Transverse colon (tissue), 4 donors: ENCODE measurements at regions of chr10 and their contacts with region 1.

Region 1: DNA sequence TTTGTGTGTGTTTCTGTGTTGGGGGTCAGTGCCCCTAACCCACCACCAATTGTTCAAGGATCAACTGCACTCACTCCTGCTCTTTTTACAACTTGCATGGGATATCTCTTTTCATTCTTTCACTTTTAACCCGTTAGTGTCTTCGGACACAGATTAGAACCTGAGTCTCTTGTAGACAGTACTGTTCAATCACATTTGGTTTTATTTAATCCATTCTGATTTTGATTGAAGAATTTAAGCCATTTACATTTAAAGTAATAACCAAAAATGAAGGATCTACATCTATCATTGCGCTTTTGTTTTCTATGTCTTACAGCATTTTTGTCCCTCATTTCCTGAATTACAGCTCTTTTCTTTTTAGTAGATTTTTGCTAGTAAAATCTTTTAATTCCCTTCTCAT is 43.6 kb downstream of the ZNF248 start:
- DNase-seq: no peak
- H3K4me3 ChIP-seq: no peak overlapping the region
- H3K27ac ChIP-seq: no peak overlapping the region
- H3K4me1 ChIP-seq: no peaks in the 10 kb centered on the region
- H3K27me3 ChIP-seq: no peaks in the 10 kb centered on the region
- CTCF ChIP-seq: no peak
- EP300 ChIP-seq: no peak
- POLR2A ChIP-seq: no peak

Region 2: GRCh38 chr10:37619336-37619735 is 194.4 kb before region 1 on chr10:
- in situ Hi-C with region 1: no loop called
- intact Hi-C with region 1: no loop called
- DNase-seq: no peak
- H3K4me3 ChIP-seq: no peak overlapping the region
- H3K27ac ChIP-seq: no peak overlapping the region
- H3K4me1 ChIP-seq: no peaks in the 10 kb centered on the region
- H3K27me3 ChIP-seq: no peaks in the 10 kb centered on the region
- CTCF ChIP-seq: no peak
- EP300 ChIP-seq: no peak
- POLR2A ChIP-seq: no peak

Region 3: GRCh38 chr10:37794305-37794976 is 19.3 kb before region 1 on chr10:
- in situ Hi-C with region 1: no loop called
- intact Hi-C with region 1: loop called (anchors 1 kb)
- DNase-seq: no peak
- H3K4me3 ChIP-seq: no peak overlapping the region
- H3K27ac ChIP-seq: no peak overlapping the region
- H3K4me1 ChIP-seq: no peaks in the 10 kb centered on the region
- H3K27me3 ChIP-seq: no peaks in the 10 kb centered on the region
- CTCF ChIP-seq: no peak
- EP300 ChIP-seq: no peak
- POLR2A ChIP-seq: no peak

Region 4: DNA sequence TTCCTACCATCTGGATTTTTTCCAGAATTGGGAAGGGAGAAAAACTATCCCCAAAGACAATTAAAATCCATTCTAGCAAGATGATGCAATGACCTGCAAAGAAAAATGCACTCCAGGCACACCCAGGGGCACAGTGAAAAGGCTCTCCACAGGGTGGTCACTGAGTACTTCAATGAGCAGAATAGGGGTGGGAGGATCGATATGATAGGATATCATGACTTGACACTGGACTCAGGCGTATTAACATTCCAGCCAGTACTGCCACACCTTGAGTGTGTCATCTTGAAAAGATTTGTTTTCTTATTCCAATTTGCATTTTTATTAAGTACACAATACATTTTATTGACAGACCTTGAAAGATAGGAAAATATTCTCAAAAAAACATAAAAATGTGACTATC is 412.6 kb after region 1 on chr10:
- in situ Hi-C with region 1: no loop called
- intact Hi-C with region 1: no loop called
- DNase-seq: no peak
- H3K4me3 ChIP-seq: no peak overlapping the region
- H3K27ac ChIP-seq: no peak overlapping the region
- H3K4me1 ChIP-seq: no peaks in the 10 kb centered on the region
- H3K27me3 ChIP-seq: no peaks in the 10 kb centered on the region
- CTCF ChIP-seq: no peak
- EP300 ChIP-seq: no peak
- POLR2A ChIP-seq: no peak